ENCODE measurements at regions of chr5 and their contacts with region 1.

Region 1: GRCh38 chr5:139482050-139482889 is at the start of gene STING1:
- DNase-seq: no peak
- H3K4me3 ChIP-seq: no peak within 1 kb of the TSS
- H3K27ac ChIP-seq: no peak within 1 kb of the TSS
- H3K4me1 ChIP-seq: peaks cover 0 to 10% (median 5%) of the 10 kb centered on the region in 4 experiments; a peak in 5 of 7 replicates
- H3K27me3 ChIP-seq: no peaks in the 10 kb centered on the region
- CTCF ChIP-seq: no peak
- EP300 ChIP-seq: no peak
- POLR2A ChIP-seq: no peak
- RAD21 ChIP-seq: no peak
- total RNA-seq, gene STING1: 0.26 and 0.42 TPM in 2 replicates

Region 2: DNA sequence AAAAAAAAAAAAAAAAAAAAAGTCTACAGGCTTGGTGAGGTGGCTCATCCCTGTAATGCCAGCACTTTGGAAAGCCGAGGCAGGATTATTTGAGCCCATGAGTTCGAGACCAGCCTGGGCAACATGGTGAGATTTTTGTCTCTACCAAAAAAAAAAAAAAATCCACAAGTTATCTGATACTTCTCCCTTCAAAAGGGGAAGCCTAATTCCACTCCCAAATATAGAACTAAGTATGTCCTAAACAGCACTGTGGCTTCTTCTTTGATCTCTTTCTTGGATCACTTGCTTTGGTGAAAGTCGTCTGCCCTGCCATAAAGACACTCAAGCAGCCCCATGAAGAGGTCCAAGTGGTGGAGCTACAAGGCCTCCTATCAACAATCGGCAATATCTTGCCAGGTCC is 19.1 kb after region 1 on chr5:
- CTCF ChIA-PET with region 1: interaction called, 20 read pairs
- POLR2A ChIA-PET with region 1: interaction called, 3 read pairs
- DNase-seq: no peak
- H3K4me3 ChIP-seq: no peak overlapping the region
- H3K27ac ChIP-seq: no peak overlapping the region
- H3K4me1 ChIP-seq: peaks cover 0 to 10% (median 3%) of the 10 kb centered on the region in 4 experiments; a peak in 4 of 7 replicates
- H3K27me3 ChIP-seq: no peaks in the 10 kb centered on the region
- CTCF ChIP-seq: no peak
- EP300 ChIP-seq: no peak
- POLR2A ChIP-seq: no peak
- RAD21 ChIP-seq: no peak